Activated naive CD8-positive, alpha-beta T cell treated with anti-CD3 and anti-CD28 coated beads, Interleukin-2, amount 10 ng/mL, durations not matched to agents 7 days and 5 days (primary cell): ENCODE measurements at regions of chr6 and their contacts with region 1.

Region 1: DNA sequence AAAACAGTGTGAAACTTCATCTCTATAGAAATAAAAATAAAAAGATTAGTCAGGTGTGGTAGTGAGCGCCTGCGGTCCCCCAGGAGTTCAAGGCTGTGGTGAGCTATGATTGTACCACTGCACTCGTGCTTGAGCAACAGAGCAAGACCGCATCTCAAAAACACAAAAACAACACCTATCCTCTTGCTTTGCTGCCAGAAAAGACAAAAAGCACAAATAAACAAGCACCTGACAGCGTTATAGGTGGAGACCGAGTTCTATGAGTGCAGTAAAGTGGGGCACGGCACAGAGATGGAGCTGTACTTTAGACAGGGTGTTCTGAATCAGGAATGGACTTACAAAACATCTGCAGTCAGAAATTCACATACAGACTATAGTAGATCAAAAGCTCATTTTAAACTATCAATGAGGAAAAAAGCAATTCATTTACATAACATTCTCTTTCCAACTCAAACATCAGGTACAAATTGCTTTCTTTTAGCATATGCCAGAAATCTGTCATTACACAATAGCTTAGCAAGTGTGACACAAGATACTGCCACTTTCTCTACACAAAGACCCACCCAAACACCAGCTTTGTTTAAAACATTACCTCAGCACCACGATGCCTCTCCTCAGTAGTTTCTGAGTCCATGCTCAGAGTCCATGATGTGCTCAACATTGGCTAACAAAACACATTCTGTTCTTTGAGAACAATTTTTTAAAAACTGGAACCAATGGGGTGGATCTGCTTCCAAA is 10.1 kb downstream of the EZR start:
- DNase-seq: no peak
- ATAC-seq: peak; percentile 11
- H3K4me3 Mint-ChIP-seq: peak overlapping the region; percentile 23
- H3K27ac Mint-ChIP-seq: peak overlapping the region; percentile 49
- H3K4me1 Mint-ChIP-seq: peaks cover 84% of the 10 kb centered on the region
- H3K27me3 Mint-ChIP-seq: no peaks in the 10 kb centered on the region

Region 2: DNA sequence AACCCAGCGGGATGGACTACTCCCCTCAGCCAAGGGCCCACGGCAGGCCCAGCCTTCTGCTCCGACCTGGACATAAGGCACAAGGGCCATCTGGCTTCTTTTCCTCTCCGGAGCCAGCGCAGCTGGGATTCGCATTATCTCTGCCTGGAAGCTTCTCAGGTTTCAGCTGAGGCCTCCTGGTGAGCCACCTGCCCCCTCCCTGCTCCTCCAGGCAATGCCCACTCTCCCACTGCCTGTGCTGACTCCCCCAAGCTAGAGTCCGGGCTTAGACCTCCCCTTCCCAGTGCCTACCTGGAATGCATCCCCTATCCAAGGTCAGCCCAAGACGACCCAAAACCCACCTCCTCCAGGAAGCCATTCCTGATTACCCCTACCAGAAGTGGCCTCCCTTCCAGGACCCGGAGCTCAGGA is 50.7 kb before region 1 on chr6:
- POLR2A ChIA-PET with region 1: no interaction called
- DNase-seq: no peak
- ATAC-seq: no peak
- H3K4me3 Mint-ChIP-seq: no peak overlapping the region
- H3K27ac Mint-ChIP-seq: no peak overlapping the region
- H3K4me1 Mint-ChIP-seq: no peaks in the 10 kb centered on the region
- H3K27me3 Mint-ChIP-seq: no peaks in the 10 kb centered on the region

Region 3: GRCh38 chr6:158778005-158778527 is 31.0 kb before region 1 on chr6:
- POLR2A ChIA-PET with region 1: no interaction called
- DNase-seq: no peak
- ATAC-seq: no peak
- H3K4me3 Mint-ChIP-seq: no peak overlapping the region
- H3K27ac Mint-ChIP-seq: no peak overlapping the region
- H3K4me1 Mint-ChIP-seq: peaks cover 17% of the 10 kb centered on the region
- H3K27me3 Mint-ChIP-seq: no peaks in the 10 kb centered on the region

Region 4: GRCh38 chr6:158789434-158789917 is 19.6 kb before region 1 on chr6:
- POLR2A ChIA-PET with region 1: interaction called, 11 read pairs
- DNase-seq: peak; percentile 58
- ATAC-seq: peak; percentile 100
- H3K4me3 Mint-ChIP-seq: peak overlapping the region; percentile 80
- H3K27ac Mint-ChIP-seq: peak overlapping the region; percentile 91
- H3K4me1 Mint-ChIP-seq: peaks cover 44% of the 10 kb centered on the region
- H3K27me3 Mint-ChIP-seq: no peaks in the 10 kb centered on the region